ENCODE measurements at regions of chrX and their contacts with region 1.

Region 1: GRCh38 chrX:101079736-101080270 is 1.1 kb downstream of the TMEM35A start:
- DNase-seq: no peak
- H3K4me3 ChIP-seq: no peak overlapping the region
- H3K27ac ChIP-seq: no peak overlapping the region
- H3K4me1 ChIP-seq: no peaks in the 10 kb centered on the region
- H3K27me3 ChIP-seq: no peaks in the 10 kb centered on the region
- CTCF ChIP-seq: no peak

Region 2: GRCh38 chrX:100973411-100973810 is 106.4 kb before region 1 on chrX:
- CTCF ChIA-PET with region 1: no interaction called
- dilution Hi-C with region 1: no loop called
- in situ Hi-C with region 1: no loop called
- intact Hi-C with region 1: no loop called
- DNase-seq: peak; percentile 31
- H3K4me3 ChIP-seq: no peak overlapping the region
- H3K27ac ChIP-seq: no peak overlapping the region
- H3K4me1 ChIP-seq: no peaks in the 10 kb centered on the region
- H3K27me3 ChIP-seq: no peaks in the 10 kb centered on the region
- CTCF ChIP-seq: no peak

Region 3: DNA sequence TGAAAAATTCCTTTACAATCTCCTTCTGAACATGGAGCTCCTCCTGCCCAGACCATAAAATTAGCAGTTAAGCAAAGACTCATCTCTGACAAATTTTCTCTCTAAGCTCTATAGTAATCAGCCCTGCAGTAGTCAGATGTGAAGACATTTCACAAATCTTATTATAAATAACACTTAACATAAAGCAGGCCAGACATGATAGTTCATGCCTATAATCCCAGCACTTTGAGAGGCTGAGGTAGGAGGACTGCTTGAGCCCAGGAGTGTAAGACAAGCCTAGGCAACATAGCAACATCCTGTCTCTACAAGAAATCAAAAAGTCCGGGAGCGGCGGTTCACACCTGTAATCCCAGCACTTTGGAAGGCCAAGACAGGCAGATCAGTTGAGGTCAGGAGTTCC is 57.8 kb before region 1 on chrX:
- CTCF ChIA-PET with region 1: no interaction called
- dilution Hi-C with region 1: loop called (anchors 5 kb)
- in situ Hi-C with region 1: no loop called
- intact Hi-C with region 1: no loop called
- DNase-seq: peak; percentile 0
- H3K4me3 ChIP-seq: no peak overlapping the region
- H3K27ac ChIP-seq: no peak overlapping the region
- H3K4me1 ChIP-seq: no peaks in the 10 kb centered on the region
- H3K27me3 ChIP-seq: no peaks in the 10 kb centered on the region
- CTCF ChIP-seq: no peak

Region 4: GRCh38 chrX:101119388-101119787 is 39.6 kb after region 1 on chrX:
- CTCF ChIA-PET with region 1: no interaction called
- dilution Hi-C with region 1: no loop called
- in situ Hi-C with region 1: no loop called
- intact Hi-C with region 1: no loop called
- DNase-seq: no peak
- H3K4me3 ChIP-seq: no peak overlapping the region
- H3K27ac ChIP-seq: no peak overlapping the region
- H3K4me1 ChIP-seq: no peaks in the 10 kb centered on the region
- H3K27me3 ChIP-seq: no peaks in the 10 kb centered on the region
- CTCF ChIP-seq: no peak

Measured in mammary epithelial cell (primary cell).